ENCODE measurements at regions of chr4 and their contacts with region 1.

Region 1: DNA sequence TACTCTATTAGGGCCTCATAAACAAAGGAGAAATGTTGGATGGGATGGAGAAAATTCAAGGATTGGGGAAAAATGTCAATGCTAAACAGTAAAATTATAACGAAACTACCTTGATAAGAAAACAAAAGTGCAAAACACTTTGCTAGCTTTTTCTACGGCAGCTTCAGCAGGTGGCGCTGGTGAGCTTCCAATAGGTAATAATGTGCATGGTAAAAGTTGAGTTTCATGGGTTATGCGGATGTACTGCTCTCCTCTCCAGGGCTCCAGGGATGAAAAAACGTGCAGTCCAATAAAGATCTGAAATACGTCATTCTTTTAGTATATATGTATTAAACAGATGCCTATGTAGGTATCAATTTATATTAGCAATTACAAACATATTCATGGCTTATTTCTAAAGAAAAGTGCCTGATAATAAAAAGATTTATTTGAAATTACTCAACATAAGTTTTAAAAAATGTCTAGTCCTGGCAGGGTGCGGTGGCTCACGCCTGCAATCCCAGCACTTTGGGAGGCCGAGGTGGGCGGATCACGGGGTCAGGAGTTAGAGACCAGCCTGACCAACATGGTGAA is 239.6 kb downstream of the GRXCR1 start:
- DNase-seq: peak; percentile 43
- CTCF ChIP-seq: peak; percentile 92

Region 2: GRCh38 chr4:43148481-43148880 is 16.4 kb after region 1 on chr4:
- CTCF ChIA-PET with region 1: interaction called, 10 read pairs
- POLR2A ChIA-PET with region 1: no interaction called
- DNase-seq: no peak
- CTCF ChIP-seq: no peak

Region 3: DNA sequence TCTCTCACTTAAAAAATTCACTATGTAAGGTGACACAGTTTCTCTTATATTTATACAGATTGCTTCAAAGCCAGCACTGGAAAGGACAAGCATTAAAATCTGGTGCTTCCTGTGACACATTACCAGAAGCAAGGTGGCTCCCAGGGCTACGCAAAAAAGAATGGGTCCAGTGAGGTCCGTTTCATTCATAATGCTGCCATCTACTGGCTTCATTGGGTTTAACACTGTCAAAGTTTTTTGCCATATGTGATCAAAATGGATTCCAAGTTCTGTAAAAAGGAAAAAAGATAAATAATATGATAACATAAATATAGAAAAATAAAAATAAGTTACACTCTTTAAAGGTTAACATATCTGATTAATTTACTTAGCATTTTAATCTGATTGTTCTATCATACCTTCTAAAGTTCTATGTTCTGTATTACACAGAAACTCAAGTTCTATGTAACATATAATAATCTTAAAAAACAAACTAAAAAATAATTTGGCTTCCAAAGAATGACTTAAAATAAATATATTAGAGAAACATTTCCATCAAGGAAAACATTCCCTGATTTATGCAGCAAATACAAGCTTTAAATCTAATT is 1497.3 kb after region 1 on chr4:
- CTCF ChIA-PET with region 1: interaction called, 12 read pairs
- POLR2A ChIA-PET with region 1: no interaction called
- DNase-seq: peak; percentile 54
- CTCF ChIP-seq: peak; percentile 71